ENCODE measurements at regions of chr4 and their contacts with region 1.

Region 1: GRCh38 chr4:81069706-81070331 is 39.3 kb downstream of the BMP3 start:
- DNase-seq: peak in 1 of 2 donors; percentile 60
- H3K4me3 ChIP-seq: no peak overlapping the region
- H3K27ac ChIP-seq: no peak overlapping the region
- H3K4me1 ChIP-seq: no peaks in the 10 kb centered on the region
- H3K27me3 ChIP-seq: peaks cover 0 to 10% of the 10 kb centered on the region in 2 donors
- CTCF ChIP-seq: peak; percentile 64 to 87

Region 2: DNA sequence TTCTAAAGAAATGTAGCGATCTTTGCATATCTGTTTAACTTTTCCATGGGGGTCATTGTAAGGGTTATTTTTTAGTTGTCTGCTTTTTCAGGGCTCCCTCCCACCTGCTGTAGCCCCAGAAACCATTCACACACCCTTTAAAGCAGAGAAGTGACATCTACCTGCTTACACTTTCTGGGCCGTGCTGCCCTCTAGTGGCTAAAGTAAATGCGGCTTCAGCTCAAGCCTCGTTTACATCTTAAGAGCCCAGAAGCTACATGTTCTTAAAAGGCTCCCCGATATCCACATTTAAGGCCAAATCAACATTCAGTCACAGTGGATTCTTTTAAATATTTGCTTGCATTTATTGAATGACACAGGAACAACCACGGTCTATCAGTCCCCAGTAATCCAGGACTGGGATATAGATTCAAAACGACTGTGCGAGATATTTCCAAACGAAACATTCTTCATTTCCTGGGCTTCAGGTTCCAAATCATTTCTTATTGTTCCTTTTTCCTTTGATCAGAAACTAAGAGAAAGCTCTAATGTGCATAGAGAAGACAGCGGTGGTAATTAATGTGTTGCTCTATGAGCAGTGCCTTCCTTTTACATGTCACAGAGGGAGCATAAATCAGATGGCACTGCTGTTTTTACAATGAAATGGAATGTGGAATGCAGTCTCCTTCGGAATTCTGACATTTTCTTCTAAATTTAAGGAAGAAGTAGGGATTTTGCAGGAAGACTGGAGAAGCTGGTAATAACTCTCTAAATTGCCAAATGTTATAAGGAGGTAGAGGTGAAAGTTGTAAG is 282.0 kb after region 1 on chr4:
- intact Hi-C with region 1: loop called (anchors 10 kb)
- DNase-seq: peak; percentile 66 to 69
- H3K4me3 ChIP-seq: no peak overlapping the region
- H3K27ac ChIP-seq: no peak overlapping the region
- H3K4me1 ChIP-seq: no peaks in the 10 kb centered on the region
- H3K27me3 ChIP-seq: no peaks in the 10 kb centered on the region
- CTCF ChIP-seq: peak; percentile 52 to 82

Region 3: DNA sequence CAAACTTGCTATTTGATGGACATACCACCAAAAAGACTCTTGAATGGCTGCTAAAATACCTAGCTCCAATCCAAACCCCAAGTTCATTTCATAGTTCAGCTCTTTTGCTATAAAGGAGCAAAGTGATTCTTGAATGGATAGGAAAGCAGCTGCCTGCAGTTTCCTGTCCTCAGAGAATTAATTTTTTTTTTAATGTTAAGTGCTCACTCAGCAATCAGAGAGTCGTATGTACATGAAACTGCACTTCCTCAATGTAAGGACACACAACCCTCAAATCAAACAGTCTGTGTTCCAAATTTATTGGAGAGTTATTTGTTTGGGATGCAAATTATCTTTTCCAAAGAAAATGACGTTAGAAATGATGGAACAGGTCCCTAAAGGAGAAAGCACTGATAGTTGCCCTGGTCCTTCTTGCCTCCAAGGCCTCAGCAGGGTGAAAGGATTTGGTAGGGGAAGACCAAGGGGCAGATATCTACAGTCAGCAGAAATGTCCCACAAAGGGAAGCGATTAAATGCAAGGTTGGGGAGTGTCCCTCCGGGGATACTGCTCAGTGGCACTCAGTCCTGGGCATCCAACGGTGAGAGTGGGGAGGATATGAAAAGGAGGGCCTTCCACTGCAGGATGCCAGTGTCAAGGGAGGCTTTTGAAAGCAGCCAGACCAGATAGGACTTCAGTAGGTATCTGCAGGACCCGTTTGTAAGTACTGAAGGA is 469.1 kb after region 1 on chr4:
- intact Hi-C with region 1: no loop called
- DNase-seq: no peak
- H3K4me3 ChIP-seq: no peak overlapping the region
- H3K27ac ChIP-seq: no peak overlapping the region
- H3K4me1 ChIP-seq: no peaks in the 10 kb centered on the region
- H3K27me3 ChIP-seq: no peaks in the 10 kb centered on the region
- CTCF ChIP-seq: no peak